Dendritic cell treated with granulocyte-macrophage colony-stimulating factor and Interleukin-4, amounts not matched to agents 40 ng/mL and 50 ng/mL, for 4 days (primary cell): ENCODE measurements at regions of chr2 and their contacts with region 1.

Region 1: DNA sequence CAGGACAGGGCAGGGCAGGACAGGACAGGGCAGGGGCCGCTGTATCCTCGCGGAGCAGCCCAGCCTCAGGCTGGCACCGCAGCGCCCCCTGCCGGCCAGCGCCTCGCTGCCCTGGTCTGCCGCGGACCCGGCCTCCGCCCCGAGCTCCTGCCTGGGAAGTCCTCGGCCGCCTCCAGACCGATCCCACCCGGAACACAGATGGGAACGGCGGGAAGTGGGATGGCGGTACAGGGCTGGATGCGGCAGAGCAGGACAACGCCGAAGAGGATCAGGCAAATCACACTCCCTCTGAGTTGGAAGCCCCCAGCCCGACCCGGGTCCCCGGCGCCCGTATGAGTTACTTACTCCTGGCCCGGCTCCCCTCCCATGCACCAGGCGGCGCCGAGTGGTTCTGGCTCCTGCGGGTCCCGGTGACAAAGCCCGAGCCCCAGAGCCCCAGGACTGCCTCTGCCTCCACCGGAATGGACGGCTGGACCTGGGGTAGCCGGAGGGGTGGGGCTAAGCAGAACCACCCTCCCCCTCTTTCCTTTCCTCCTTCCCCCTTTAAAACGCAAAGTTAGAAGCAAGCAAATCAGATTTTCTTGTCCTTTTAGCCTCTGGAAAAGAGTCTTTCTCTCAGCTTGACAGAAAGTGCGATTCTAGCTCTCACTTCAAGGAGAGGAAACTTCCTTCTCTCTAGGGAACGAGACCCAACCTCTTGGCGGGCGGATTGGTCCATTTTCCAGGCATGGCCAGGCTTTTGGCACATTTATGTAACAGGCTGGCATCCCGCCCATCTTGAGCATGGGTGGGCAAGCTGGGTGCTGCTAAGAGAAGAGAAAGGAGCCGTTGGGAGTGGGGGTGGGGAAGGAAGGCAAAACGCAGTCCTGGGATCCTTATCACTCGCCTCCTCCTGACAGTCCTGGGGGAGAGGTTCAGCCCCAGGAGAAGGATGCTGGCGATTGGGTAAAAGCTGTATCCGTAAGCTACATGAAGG is at the start of gene TP53I3:
- H3K4me3 Mint-ChIP-seq: peak within 1 kb of the TSS; percentile 78
- H3K27ac Mint-ChIP-seq: peak within 1 kb of the TSS; percentile 88
- H3K4me1 Mint-ChIP-seq: peaks cover 36% of the 10 kb centered on the region
- H3K27me3 Mint-ChIP-seq: no peaks in the 10 kb centered on the region

Region 2: DNA sequence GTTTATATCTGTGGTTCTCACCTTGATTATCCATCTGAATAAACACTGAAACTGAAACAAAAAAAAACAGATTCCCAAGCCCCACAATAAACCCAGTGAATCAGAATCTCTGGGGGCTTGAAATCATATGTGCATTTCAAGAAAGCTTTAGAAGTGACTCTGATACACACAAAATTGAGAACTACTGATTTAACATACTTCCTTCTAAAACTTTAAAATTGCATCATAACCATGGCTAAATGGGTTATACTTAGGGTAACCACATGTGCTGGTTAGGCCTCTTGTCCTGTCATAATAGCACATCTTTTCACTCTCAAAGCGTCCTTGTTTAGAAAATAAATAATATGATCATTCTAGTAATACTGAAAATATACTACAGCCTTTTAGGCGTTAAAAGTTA is 258.6 kb before region 1 on chr2:
- intact Hi-C with region 1: loop called (anchors 2 kb)
- H3K4me3 Mint-ChIP-seq: no peak overlapping the region
- H3K27ac Mint-ChIP-seq: no peak overlapping the region
- H3K4me1 Mint-ChIP-seq: peaks cover 9% of the 10 kb centered on the region
- H3K27me3 Mint-ChIP-seq: no peaks in the 10 kb centered on the region

Region 3: GRCh38 chr2:24046930-24047702 is 37.6 kb before region 1 on chr2 and contains the start of gene WDCP:
- intact Hi-C with region 1: loop called (anchors 2 kb)
- H3K4me3 Mint-ChIP-seq: peak within 1 kb of the TSS; percentile 96
- H3K27ac Mint-ChIP-seq: peak within 1 kb of the TSS; percentile 85
- H3K4me1 Mint-ChIP-seq: peaks cover 19% of the 10 kb centered on the region
- H3K27me3 Mint-ChIP-seq: peaks cover 17% of the 10 kb centered on the region

Region 4: GRCh38 chr2:24123195-24123921 is 38.7 kb after region 1 on chr2 and contains the starts of genes FAM228B and PFN4:
- intact Hi-C with region 1: loop called (anchors 1 kb)
- H3K4me3 Mint-ChIP-seq: peak within 1 kb of the TSS; percentile 82
- H3K27ac Mint-ChIP-seq: peak within 1 kb of the TSS; percentile 89
- H3K4me1 Mint-ChIP-seq: peaks cover 7% of the 10 kb centered on the region
- H3K27me3 Mint-ChIP-seq: no peaks in the 10 kb centered on the region